OCI-LY7 (cell line): ENCODE measurements at regions of chr17 and their contacts with region 1.

Region 1: GRCh38 chr17:30677550-30678249 is 146.8 kb downstream of the CRLF3 start:
- DNase-seq: no peak
- H3K4me3 ChIP-seq: no peak overlapping the region
- H3K27ac ChIP-seq: no peak overlapping the region
- H3K4me1 ChIP-seq: no peaks in the 10 kb centered on the region
- CTCF ChIP-seq: no peak

Region 2: DNA sequence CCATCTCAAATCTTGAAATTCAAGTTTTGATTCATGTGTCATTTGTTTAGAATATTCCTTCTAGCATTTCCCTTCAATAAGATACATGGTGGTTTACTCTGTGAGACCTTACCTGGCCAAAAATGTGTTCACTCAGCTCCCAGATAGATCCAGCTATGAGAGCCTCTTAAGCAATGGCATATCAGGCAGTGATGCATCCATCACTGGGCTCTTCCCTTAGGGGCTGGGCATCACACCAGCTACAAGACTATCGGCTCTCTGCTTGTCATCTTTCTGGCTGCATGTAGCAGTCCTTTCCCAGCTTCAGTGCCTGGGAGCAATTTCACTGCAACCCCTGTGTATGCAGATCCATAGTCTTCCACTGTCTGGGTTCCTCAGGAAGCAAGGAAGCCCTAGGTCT is 159.9 kb before region 1 on chr17:
- CTCF ChIA-PET with region 1: no interaction called
- POLR2A ChIA-PET with region 1: interaction called, 10 read pairs
- intact Hi-C with region 1: no loop called
- DNase-seq: no peak
- H3K4me3 ChIP-seq: no peak overlapping the region
- H3K27ac ChIP-seq: no peak overlapping the region
- H3K4me1 ChIP-seq: no peaks in the 10 kb centered on the region
- CTCF ChIP-seq: no peak